ENCODE measurements at regions of chr12 and their contacts with region 1.

Region 1: GRCh38 chr12:101939856-101940265 is 62.5 kb downstream of the DRAM1 start:
- DNase-seq: peak; percentile 89
- H3K4me3 Mint-ChIP-seq: no peak overlapping the region
- H3K27ac Mint-ChIP-seq: no peak overlapping the region
- H3K4me1 Mint-ChIP-seq: peaks cover 24% of the 10 kb centered on the region
- H3K27me3 Mint-ChIP-seq: peaks cover 6% of the 10 kb centered on the region

Region 2: GRCh38 chr12:101527682-101528081 is 412.2 kb before region 1 on chr12:
- intact Hi-C with region 1: no loop called
- DNase-seq: no peak
- H3K4me3 Mint-ChIP-seq: no peak overlapping the region
- H3K27ac Mint-ChIP-seq: no peak overlapping the region
- H3K4me1 Mint-ChIP-seq: no peaks in the 10 kb centered on the region
- H3K27me3 Mint-ChIP-seq: no peaks in the 10 kb centered on the region

Region 3: DNA sequence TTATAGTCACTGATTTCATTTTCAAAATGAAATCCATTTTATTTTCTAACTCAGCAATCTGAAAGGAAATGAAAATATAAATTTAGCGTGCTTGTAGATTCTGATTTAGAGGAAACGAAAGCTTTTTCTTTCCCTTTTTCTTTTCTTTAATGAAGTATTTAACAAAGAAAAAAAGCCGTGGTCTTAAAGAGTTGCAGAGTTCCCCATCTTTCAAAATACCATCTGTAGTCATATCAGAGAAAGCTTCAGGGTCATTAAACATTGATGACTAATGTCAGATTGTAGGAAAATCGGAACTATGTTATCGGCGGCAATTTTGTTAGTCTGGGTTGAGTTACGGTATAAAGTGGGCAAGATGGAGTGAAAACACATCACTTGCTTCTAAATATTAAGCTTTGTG is 30.2 kb before region 1 on chr12:
- intact Hi-C with region 1: no loop called
- DNase-seq: no peak
- H3K4me3 Mint-ChIP-seq: no peak overlapping the region
- H3K27ac Mint-ChIP-seq: no peak overlapping the region
- H3K4me1 Mint-ChIP-seq: no peaks in the 10 kb centered on the region
- H3K27me3 Mint-ChIP-seq: no peaks in the 10 kb centered on the region

Region 4: GRCh38 chr12:101924618-101925017 is 15.2 kb before region 1 on chr12:
- intact Hi-C with region 1: no loop called
- DNase-seq: no peak
- H3K4me3 Mint-ChIP-seq: no peak overlapping the region
- H3K27ac Mint-ChIP-seq: no peak overlapping the region
- H3K4me1 Mint-ChIP-seq: peaks cover 4% of the 10 kb centered on the region
- H3K27me3 Mint-ChIP-seq: peaks cover 6% of the 10 kb centered on the region

Region 5: GRCh38 chr12:102061560-102062418 is 121.9 kb after region 1 on chr12 and contains the start of gene WASHC3:
- intact Hi-C with region 1: loop called (anchors 1 kb)
- DNase-seq: peak; percentile 99
- H3K4me3 Mint-ChIP-seq: peak within 1 kb of the TSS; percentile 99
- H3K27ac Mint-ChIP-seq: peak within 1 kb of the TSS; percentile 99
- H3K4me1 Mint-ChIP-seq: peaks cover 33% of the 10 kb centered on the region
- H3K27me3 Mint-ChIP-seq: no peaks in the 10 kb centered on the region
- total RNA-seq, gene WASHC3: 29.0 and 33.1 TPM in 2 replicates

Region 6: GRCh38 chr12:102300824-102301461 is 361.1 kb after region 1 on chr12:
- intact Hi-C with region 1: loop called (anchors 2 kb)
- DNase-seq: peak; percentile 80
- H3K4me3 Mint-ChIP-seq: no peak overlapping the region
- H3K27ac Mint-ChIP-seq: no peak overlapping the region
- H3K4me1 Mint-ChIP-seq: peaks cover 18% of the 10 kb centered on the region
- H3K27me3 Mint-ChIP-seq: peaks cover 16% of the 10 kb centered on the region

Region 7: GRCh38 chr12:102740141-102740955 is 800.5 kb after region 1 on chr12:
- intact Hi-C with region 1: loop called (anchors 1 kb)
- DNase-seq: no peak
- H3K4me3 Mint-ChIP-seq: no peak overlapping the region
- H3K27ac Mint-ChIP-seq: no peak overlapping the region
- H3K4me1 Mint-ChIP-seq: peaks cover 2% of the 10 kb centered on the region
- H3K27me3 Mint-ChIP-seq: no peaks in the 10 kb centered on the region

Region 8: DNA sequence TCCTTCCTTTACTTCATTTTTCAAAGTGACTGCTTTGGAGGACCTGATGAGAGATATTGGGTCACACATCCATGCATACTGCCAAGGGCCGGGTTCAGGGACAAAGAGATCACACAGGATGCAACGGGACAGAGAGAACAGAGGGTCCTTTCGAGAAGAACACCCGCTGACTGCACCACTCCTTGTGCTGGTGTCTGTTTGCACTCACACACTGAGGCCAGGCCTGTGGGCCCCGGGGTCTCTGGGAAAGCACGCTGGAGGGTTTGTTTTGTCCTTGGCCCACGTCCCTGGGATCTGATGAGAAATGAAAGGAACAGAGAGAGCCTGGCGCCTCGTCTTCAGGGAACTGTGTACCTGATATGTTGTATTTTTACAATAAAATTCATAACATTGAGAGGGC is 935.0 kb after region 1 on chr12:
- intact Hi-C with region 1: loop called (anchors 2 kb)
- DNase-seq: no peak
- H3K4me3 Mint-ChIP-seq: no peak overlapping the region
- H3K27ac Mint-ChIP-seq: no peak overlapping the region
- H3K4me1 Mint-ChIP-seq: peaks cover 8% of the 10 kb centered on the region
- H3K27me3 Mint-ChIP-seq: peaks cover 9% of the 10 kb centered on the region

Measured in activated CD4-positive, alpha-beta T cell treated with anti-CD3 and anti-CD28 coated beads, Interleukin-2, amount 10 ng/mL, durations not matched to agents 24 days and 14 days (primary cell).